ENCODE measurements at regions of chr5 and their contacts with region 1.

Region 1: GRCh38 chr5:62431735-62432620 is 19.4 kb downstream of the IPO11 start:
- DNase-seq: no peak
- ATAC-seq: no peak
- H3K4me3 Mint-ChIP-seq: no peak overlapping the region
- H3K27ac Mint-ChIP-seq: peak overlapping the region; percentile 25
- H3K4me1 Mint-ChIP-seq: peaks cover 7% of the 10 kb centered on the region
- H3K27me3 Mint-ChIP-seq: no peaks in the 10 kb centered on the region

Region 2: GRCh38 chr5:62214701-62215100 is 217.3 kb before region 1 on chr5:
- CTCF ChIA-PET with region 1: no interaction called
- POLR2A ChIA-PET with region 1: no interaction called
- intact Hi-C with region 1: no loop called
- DNase-seq: no peak
- ATAC-seq: peak; percentile 84
- H3K4me3 Mint-ChIP-seq: no peak overlapping the region
- H3K27ac Mint-ChIP-seq: no peak overlapping the region
- H3K4me1 Mint-ChIP-seq: peaks cover 4% of the 10 kb centered on the region
- H3K27me3 Mint-ChIP-seq: peaks cover 9% of the 10 kb centered on the region

Region 3: DNA sequence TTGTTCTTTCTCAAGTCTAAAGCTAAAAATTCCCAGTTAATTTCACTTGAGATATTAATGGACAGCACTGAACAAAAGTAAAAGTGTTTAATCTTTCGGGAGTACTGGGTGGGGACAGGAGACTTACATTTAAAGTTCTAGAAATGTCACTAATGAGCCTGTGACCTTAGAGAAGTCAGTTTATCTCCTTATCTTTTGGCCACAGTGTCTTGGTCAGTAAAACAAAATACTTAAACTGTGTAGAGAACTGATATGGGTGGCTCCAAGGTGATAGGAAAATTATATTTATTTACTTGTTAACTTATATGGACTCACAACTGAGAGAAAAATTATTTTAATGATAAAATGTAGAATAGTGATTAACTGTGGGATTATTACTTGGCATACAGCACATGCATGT is 10.6 kb before region 1 on chr5:
- CTCF ChIA-PET with region 1: interaction called, 3 read pairs
- POLR2A ChIA-PET with region 1: interaction called, 11 read pairs
- intact Hi-C with region 1: no loop called
- DNase-seq: no peak
- ATAC-seq: no peak
- H3K4me3 Mint-ChIP-seq: no peak overlapping the region
- H3K27ac Mint-ChIP-seq: no peak overlapping the region
- H3K4me1 Mint-ChIP-seq: peaks cover 6% of the 10 kb centered on the region
- H3K27me3 Mint-ChIP-seq: no peaks in the 10 kb centered on the region

Region 4: DNA sequence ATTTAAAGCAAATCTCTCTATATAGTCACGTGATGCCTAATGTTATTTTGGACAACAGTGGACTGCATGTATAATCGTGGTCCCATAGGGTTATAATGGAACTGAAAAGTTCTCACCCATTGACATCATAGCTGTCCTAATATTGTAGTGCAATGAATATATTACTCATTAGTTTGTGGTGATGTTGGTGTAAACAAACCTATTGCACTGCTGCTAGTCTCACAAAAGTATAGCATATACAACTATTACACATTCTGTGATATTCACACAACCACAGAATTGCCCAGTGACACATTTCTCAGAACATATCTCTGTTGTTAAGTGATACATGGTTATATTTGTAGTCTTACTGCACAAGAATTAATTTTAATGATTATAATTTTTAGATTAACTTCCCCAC is 18.3 kb after region 1 on chr5:
- CTCF ChIA-PET with region 1: interaction called, 10 read pairs
- POLR2A ChIA-PET with region 1: no interaction called
- intact Hi-C with region 1: no loop called
- DNase-seq: no peak
- ATAC-seq: no peak
- H3K4me3 Mint-ChIP-seq: no peak overlapping the region
- H3K27ac Mint-ChIP-seq: no peak overlapping the region
- H3K4me1 Mint-ChIP-seq: no peaks in the 10 kb centered on the region
- H3K27me3 Mint-ChIP-seq: no peaks in the 10 kb centered on the region

Measured in activated CD4-positive, alpha-beta T cell treated with anti-CD3 and anti-CD28 coated beads for 36 hours (primary cell).